ENCODE measurements at regions of chr10 and their contacts with region 1.

Region 1: DNA sequence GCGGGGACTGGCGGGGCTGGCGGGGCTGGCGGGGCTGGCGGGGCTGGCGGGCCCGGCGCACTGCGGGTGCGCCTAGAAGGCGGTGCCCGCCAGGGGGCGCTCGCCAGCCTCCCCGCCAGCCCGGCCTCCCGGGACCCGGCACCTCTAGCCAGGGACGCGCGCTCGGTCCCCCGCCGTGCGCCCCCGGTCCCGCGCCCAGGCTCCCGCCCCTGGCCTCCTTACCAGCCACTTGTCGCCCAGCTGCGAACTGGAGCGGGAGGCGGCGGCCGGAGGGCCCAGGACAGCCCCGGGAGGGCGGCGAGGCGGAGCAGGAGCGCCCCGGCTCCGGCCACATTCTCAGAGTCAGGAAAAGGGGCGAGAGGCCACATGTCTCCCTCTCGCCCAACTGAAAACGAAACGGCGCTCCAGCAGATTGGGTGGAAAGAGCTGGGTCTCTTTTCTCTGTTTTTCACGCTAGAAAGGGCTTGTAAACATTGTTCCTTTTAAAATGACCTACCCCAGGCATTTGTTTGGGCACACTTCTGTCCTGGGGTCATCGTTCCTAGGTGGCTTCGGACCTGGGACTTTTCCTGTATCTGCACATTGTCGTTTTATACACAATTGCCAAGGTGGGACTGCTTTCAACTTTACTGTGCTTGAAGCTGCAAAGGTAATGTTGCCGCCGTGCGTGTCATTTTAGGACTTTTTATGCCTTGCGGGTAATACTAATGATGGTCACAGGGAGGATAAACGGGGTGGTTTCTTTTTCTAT is 378 bp upstream of the PRKCQ start:
- DNase-seq: peak; percentile 98
- ATAC-seq: peak; percentile 66
- H3K4me3 Mint-ChIP-seq: peak overlapping the region; percentile 96
- H3K27ac Mint-ChIP-seq: peak overlapping the region; percentile 97
- H3K4me1 Mint-ChIP-seq: peaks cover 46% of the 10 kb centered on the region
- H3K27me3 Mint-ChIP-seq: no peaks in the 10 kb centered on the region

Region 2: GRCh38 chr10:6328699-6329423 is 251.6 kb before region 1 on chr10:
- POLR2A ChIA-PET with region 1: no interaction called
- DNase-seq: no peak
- ATAC-seq: no peak
- H3K4me3 Mint-ChIP-seq: no peak overlapping the region
- H3K27ac Mint-ChIP-seq: no peak overlapping the region
- H3K4me1 Mint-ChIP-seq: peaks cover 3% of the 10 kb centered on the region
- H3K27me3 Mint-ChIP-seq: no peaks in the 10 kb centered on the region

Region 3: GRCh38 chr10:6445501-6446316 is 134.7 kb before region 1 on chr10:
- POLR2A ChIA-PET with region 1: interaction called, 14 read pairs
- DNase-seq: peak; percentile 64
- ATAC-seq: no peak
- H3K4me3 Mint-ChIP-seq: peak overlapping the region; percentile 3
- H3K27ac Mint-ChIP-seq: peak overlapping the region; percentile 69
- H3K4me1 Mint-ChIP-seq: peaks cover 18% of the 10 kb centered on the region
- H3K27me3 Mint-ChIP-seq: no peaks in the 10 kb centered on the region

Region 4: DNA sequence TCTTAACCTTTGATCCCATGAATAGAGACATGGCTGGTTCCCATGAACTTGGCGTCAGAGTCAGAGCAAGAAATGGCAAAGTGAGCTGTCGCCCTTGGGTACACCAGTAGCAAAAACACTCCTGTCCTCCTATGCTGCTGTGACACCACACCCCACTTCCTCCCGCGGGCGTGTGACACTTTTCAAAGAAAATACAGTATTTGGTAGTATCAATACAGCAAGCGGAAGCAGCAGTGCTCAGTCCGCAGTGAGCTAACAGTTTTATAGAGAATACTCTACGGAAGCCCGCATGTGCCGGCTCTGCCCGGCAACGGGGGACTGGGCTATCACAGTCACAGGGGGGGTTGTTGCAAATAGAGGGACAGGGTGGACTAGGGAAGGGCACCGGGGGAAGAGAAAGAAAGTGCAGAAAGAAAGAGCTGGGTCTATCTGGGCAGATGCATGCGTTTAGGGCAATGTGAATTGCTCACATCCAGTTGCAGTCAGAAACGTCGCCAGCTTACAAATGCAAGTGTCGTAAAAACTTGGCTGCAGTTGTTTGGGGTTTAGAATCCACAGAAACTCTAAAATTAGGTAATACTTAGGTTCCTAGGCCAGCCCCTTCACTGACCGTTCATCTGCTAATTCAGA is 50.1 kb before region 1 on chr10:
- POLR2A ChIA-PET with region 1: interaction called, 18 read pairs
- DNase-seq: peak; percentile 76
- ATAC-seq: peak; percentile 98
- H3K4me3 Mint-ChIP-seq: peak overlapping the region; percentile 93
- H3K27ac Mint-ChIP-seq: peak overlapping the region; percentile 98
- H3K4me1 Mint-ChIP-seq: peaks cover 67% of the 10 kb centered on the region
- H3K27me3 Mint-ChIP-seq: no peaks in the 10 kb centered on the region

Region 5: GRCh38 chr10:6563075-6563474 is 17.4 kb before region 1 on chr10:
- POLR2A ChIA-PET with region 1: interaction called, 10 read pairs
- DNase-seq: peak; percentile 50
- ATAC-seq: peak; percentile 89
- H3K4me3 Mint-ChIP-seq: peak overlapping the region; percentile 85
- H3K27ac Mint-ChIP-seq: peak overlapping the region; percentile 85
- H3K4me1 Mint-ChIP-seq: peaks cover 68% of the 10 kb centered on the region
- H3K27me3 Mint-ChIP-seq: no peaks in the 10 kb centered on the region

Region 6: DNA sequence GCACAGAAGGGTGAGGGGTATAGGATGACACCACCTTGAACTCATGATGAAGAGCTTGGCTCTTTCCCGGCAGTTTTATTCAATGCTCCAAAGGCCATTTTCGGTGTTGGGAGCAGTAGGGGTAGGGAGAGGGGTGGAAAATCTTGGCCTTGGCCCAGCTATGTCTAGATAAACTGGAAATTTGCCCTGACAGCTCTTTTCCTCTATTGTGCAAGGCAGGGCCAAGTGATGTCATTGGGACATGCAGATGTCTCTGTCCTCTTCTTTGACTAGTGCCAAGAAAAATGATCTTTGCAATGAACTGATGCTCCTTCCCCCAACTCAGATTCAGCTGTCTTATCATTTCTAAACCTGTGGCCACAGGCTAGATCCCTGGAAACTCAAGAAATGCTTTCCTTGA is 27.3 kb after region 1 on chr10:
- POLR2A ChIA-PET with region 1: interaction called, 12 read pairs
- DNase-seq: no peak
- ATAC-seq: no peak
- H3K4me3 Mint-ChIP-seq: no peak overlapping the region
- H3K27ac Mint-ChIP-seq: no peak overlapping the region
- H3K4me1 Mint-ChIP-seq: peaks cover 53% of the 10 kb centered on the region
- H3K27me3 Mint-ChIP-seq: no peaks in the 10 kb centered on the region

Region 7: GRCh38 chr10:6647811-6648526 is 67.5 kb after region 1 on chr10:
- POLR2A ChIA-PET with region 1: interaction called, 10 read pairs
- DNase-seq: peak; percentile 58
- ATAC-seq: peak; percentile 89
- H3K4me3 Mint-ChIP-seq: peak overlapping the region; percentile 22
- H3K27ac Mint-ChIP-seq: no peak overlapping the region
- H3K4me1 Mint-ChIP-seq: peaks cover 29% of the 10 kb centered on the region
- H3K27me3 Mint-ChIP-seq: peaks cover 3% of the 10 kb centered on the region